Naive thymus-derived CD8-positive, alpha-beta T cell (primary cell): ENCODE measurements at regions of chr5 and their contacts with region 1.

Region 1: DNA sequence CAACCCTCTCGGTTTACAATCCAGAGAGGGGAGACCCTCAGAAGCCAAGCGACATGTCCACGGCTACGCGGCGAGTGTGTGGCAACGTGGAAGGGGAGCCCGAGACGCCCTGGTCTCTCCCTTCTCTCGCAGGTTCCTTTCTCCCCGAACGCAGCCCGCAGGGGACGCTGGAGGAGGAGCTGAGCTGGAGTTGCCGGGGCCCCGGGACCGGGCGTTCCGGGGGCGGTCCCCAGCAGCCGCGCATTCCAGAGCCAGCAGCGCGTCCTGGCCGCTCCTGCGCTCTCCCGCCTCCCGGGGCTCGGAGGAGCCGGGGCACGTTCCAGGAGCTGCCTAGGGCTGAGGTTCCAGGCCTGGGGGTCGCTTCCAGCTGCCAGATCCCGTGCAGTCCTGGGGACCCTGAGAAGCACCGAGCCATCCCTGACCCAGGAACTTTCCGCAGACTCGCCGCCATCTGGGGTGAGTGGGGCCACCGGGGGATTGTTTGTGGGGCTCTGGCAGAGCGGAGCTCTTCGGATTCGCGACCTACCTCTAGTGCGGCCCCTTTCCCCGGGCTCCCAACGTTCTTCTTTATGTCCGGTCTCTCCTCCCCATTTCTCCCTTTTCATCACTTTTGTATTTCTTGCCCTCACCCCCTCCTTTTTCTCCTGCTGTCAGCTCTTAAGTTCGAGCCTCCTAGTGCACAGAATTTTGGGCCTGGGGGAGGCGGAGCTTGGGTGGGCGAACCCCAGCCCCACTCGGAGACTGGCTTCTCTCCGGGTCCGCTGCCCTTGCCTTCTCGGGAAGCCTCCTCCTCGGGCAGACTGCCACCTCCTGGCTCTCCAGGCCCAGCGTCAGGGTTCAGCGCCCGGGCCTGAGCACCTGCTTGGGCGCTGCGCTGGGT is at the start of gene SMIM3:
- DNase-seq: peak; percentile 38 to 80 (median 58)
- ATAC-seq: peak; percentile 60 to 78
- H3K4me3 Mint-ChIP-seq: peak within 1 kb of the TSS; percentile 91 to 100 (median 97)
- H3K27ac Mint-ChIP-seq: peak within 1 kb of the TSS; percentile 81 to 95 (median 90)
- H3K4me1 Mint-ChIP-seq: peaks cover 28 to 59% (median 57%) of the 10 kb centered on the region in 4 donors
- H3K27me3 Mint-ChIP-seq: peaks cover 0 to 2% (median 0%) of the 10 kb centered on the region in 5 donors
- polyA plus RNA-seq, gene SMIM3: 8.5 to 12.2 (median 8.6) TPM

Region 2: DNA sequence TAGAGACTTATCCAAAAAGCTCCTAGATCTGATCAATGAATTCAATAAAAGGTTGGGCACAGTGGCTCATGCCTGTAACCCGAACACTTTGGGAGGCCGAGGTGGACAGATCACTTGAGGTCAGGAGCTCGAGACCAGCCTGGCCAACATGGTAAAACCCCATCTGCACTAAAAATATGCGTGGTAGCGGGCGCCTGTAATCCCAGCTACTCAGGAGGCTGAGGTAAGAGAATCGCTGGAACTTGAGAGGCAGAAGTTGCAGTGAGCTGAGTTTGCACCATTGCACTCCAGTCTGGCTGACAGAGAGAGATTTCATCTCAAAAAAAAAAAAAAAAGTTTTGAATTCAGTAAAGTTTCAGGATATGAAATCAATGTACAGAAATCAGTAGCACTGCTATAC is 39.9 kb before region 1 on chr5:
- POLR2A ChIA-PET with region 1: no interaction called
- DNase-seq: no peak
- ATAC-seq: no peak
- H3K4me3 Mint-ChIP-seq: no peak overlapping the region
- H3K27ac Mint-ChIP-seq: peak overlapping the region in 3 of 10 donors; percentile 49 to 86 (median 57)
- H3K4me1 Mint-ChIP-seq: peaks cover 44 to 95% (median 81%) of the 10 kb centered on the region in 4 donors
- H3K27me3 Mint-ChIP-seq: no peaks in the 10 kb centered on the region

Region 3: DNA sequence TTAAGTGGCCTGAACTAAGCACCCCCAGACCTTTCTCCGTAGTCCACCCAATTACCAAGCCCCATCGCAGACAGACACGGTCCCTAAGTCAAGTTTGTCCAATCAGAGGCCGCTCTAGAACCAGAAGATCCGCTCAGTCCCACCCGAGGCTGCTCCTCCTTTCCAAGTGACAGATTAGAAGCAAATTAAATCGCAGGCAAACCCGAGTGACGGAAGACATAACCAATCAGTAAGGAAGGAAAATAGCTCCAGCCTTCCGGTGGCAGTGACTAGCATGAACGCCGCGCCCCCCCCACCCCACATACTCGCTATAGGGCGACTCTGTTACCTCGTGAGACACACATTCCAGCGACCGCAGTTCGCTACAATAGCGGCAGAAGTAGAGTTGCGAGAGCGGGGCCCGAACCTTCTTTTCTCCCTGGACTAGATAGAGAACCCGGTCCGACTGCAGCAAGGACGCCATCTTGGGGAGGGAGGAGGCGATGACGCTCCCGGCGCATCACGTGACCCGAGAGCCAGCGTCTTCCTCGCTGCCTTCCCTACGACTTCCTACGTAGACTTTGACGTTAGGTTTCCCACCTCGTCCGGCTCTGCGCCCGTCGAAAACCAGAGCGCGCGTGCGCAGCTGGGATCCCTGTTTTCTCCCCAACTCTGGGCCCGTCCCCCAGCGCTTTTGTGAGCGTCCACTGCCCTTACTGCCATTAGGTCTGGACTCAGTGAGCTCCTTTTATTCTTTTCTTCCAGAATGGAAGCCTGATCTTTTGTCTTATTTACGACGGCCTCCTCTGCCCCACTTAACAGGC is 20.0 kb before region 1 on chr5 and contains the start of gene DCTN4:
- POLR2A ChIA-PET with region 1: interaction called, 23 read pairs
- DNase-seq: peak; percentile 86 to 99 (median 94)
- ATAC-seq: peak; percentile 93 to 94
- H3K4me3 Mint-ChIP-seq: peak within 1 kb of the TSS in 1 of 10 donors; percentile 4
- H3K27ac Mint-ChIP-seq: no peak within 1 kb of the TSS
- H3K4me1 Mint-ChIP-seq: peaks cover 12 to 50% (median 31%) of the 10 kb centered on the region in 4 donors
- H3K27me3 Mint-ChIP-seq: peaks cover 0 to 14% (median 0%) of the 10 kb centered on the region in 5 donors
- polyA plus RNA-seq, gene DCTN4: 8.1 to 11.5 (median 9.5) TPM

Region 4: DNA sequence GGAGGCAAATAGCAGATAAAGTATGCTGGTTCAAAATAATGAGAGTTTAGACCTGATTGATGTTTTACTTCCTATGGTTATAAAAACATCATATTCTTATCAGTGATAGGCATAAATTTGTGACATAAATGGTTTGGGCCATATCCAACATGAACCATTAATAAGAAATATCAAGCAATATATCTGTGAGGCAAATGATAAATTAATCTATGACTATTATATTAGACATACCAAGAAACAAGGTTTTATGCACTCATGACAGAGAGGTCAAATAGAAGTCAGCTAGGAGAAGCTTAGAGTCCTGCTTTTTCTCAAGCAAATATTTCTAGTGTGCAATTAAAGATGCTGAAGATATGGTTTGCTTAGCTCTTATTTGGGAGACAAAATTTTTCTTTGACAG is 10.2 kb after region 1 on chr5:
- POLR2A ChIA-PET with region 1: interaction called, 10 read pairs
- DNase-seq: no peak
- ATAC-seq: no peak
- H3K4me3 Mint-ChIP-seq: peak overlapping the region in 1 of 10 donors; percentile 60
- H3K27ac Mint-ChIP-seq: peak overlapping the region in 5 of 10 donors; percentile 4 to 81 (median 31)
- H3K4me1 Mint-ChIP-seq: peaks cover 24 to 66% (median 57%) of the 10 kb centered on the region in 4 donors
- H3K27me3 Mint-ChIP-seq: no peaks in the 10 kb centered on the region

Region 5: GRCh38 chr5:150931368-150931965 is 152.7 kb after region 1 on chr5:
- POLR2A ChIA-PET with region 1: no interaction called
- DNase-seq: no peak
- ATAC-seq: no peak
- H3K4me3 Mint-ChIP-seq: no peak overlapping the region
- H3K27ac Mint-ChIP-seq: no peak overlapping the region
- H3K4me1 Mint-ChIP-seq: no peaks in the 10 kb centered on the region
- H3K27me3 Mint-ChIP-seq: peaks cover 0 to 2% (median 0%) of the 10 kb centered on the region in 5 donors

Region 6: GRCh38 chr5:151805414-151806223 is 1026.9 kb after region 1 on chr5:
- POLR2A ChIA-PET with region 1: no interaction called
- DNase-seq: no peak
- ATAC-seq: no peak
- H3K4me3 Mint-ChIP-seq: no peak overlapping the region
- H3K27ac Mint-ChIP-seq: peak overlapping the region in 6 of 10 donors; percentile 2 to 63 (median 36)
- H3K4me1 Mint-ChIP-seq: peaks cover 5 to 12% (median 7%) of the 10 kb centered on the region in 4 donors
- H3K27me3 Mint-ChIP-seq: no peaks in the 10 kb centered on the region